ENCODE measurements at regions of chr7 and their contacts with region 1.

Region 1: GRCh38 chr7:55048221-55048859 is 29.5 kb downstream of the EGFR start:
- DNase-seq: no peak
- H3K4me3 ChIP-seq: no peak overlapping the region
- CTCF ChIP-seq: no peak

Region 2: DNA sequence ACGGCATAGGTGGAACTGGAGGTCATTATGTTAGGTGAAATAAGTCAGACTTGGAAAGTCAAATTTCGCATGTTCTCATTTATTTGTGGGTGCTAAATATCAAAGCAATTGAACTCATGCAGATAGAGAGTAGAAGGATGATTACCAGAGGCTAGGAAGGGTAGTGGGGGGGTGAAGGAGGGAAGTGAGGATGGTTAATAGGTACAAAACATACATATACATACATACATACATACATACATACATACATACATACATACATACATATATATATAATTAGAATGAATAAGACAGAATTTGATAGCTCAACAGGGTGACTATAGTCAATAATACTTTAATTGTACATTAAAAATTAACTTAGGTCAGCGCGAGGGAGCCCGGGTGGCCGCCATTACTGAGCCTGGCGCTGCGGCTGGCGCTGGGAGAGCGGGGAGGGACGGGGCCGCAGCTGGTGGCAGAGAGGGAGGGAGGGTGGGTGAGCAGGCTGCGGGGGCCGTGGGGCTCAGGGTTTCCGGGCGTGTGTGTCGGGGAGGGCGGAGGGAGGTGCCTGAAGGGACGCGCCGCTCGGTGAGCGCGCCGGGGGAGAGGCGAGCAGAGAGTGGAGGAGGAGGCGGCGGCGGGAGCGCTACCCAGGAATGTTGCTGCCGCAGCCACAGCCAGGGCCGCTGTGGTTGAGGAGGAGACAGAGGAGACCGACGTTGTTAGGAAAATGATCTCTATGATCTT is 115.4 kb before region 1 on chr7:
- CTCF ChIA-PET with region 1: no interaction called
- POLR2A ChIA-PET with region 1: no interaction called
- DNase-seq: no peak
- H3K4me3 ChIP-seq: peak overlapping the region; percentile 51
- CTCF ChIP-seq: no peak

Region 3: GRCh38 chr7:55036958-55037736 is 11.2 kb before region 1 on chr7:
- CTCF ChIA-PET with region 1: interaction called, 14 read pairs
- POLR2A ChIA-PET with region 1: no interaction called
- DNase-seq: no peak
- H3K4me3 ChIP-seq: no peak overlapping the region
- CTCF ChIP-seq: no peak

Region 4: GRCh38 chr7:55245271-55245723 is 197.0 kb after region 1 on chr7:
- CTCF ChIA-PET with region 1: interaction called, 150 read pairs
- POLR2A ChIA-PET with region 1: no interaction called
- DNase-seq: peak; percentile 46
- H3K4me3 ChIP-seq: no peak overlapping the region
- CTCF ChIP-seq: no peak